H1 (cell line): ENCODE measurements at regions of chr11 and their contacts with region 1.

Region 1: DNA sequence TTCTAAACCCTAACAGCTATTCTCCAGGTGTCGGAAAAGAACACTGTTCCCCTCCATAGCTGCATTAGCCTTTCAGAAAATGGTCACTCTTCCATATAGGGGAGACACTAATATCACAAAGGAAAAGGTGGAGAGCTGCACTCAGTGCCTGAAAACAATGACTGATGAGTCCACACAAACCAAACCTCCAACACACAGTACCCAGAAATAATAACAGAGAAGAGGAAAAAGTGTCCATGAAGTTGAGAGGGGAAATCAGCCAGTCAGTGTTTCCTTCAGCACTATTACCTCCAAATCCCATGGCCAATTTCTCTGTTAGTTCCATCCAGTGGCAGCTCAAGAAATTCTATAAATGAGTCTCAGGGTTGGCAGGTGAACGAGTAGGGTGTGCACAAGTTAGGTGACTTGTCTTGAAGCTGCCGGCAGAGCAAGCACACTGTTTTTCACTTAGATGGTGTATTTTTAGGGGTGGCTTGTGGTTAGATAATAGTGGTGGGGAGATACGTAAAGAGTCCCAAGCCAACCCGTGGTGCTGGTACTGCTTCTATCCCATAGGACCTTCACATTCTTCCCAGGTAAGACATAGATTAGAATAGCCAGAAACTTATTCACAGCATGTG is 84.5 kb upstream of the CHRM4 start:
- DNase-seq: no peak
- H3K4me3 ChIP-seq: no peak overlapping the region
- H3K27ac ChIP-seq: no peak overlapping the region
- H3K4me1 ChIP-seq: no peaks in the 10 kb centered on the region
- H3K27me3 ChIP-seq: no peaks in the 10 kb centered on the region
- CTCF ChIP-seq: no peak
- EP300 ChIP-seq: no peak
- POLR2A ChIP-seq: no peak
- RAD21 ChIP-seq: no peak

Region 2: GRCh38 chr11:46497498-46497897 is 21.5 kb after region 1 on chr11:
- CTCF ChIA-PET with region 1: interaction called, 11 read pairs
- POLR2A ChIA-PET with region 1: no interaction called
- DNase-seq: no peak
- H3K4me3 ChIP-seq: no peak overlapping the region
- H3K27ac ChIP-seq: no peak overlapping the region
- H3K4me1 ChIP-seq: no peaks in the 10 kb centered on the region
- H3K27me3 ChIP-seq: no peaks in the 10 kb centered on the region
- CTCF ChIP-seq: no peak
- EP300 ChIP-seq: no peak
- POLR2A ChIP-seq: no peak
- RAD21 ChIP-seq: no peak

Region 3: GRCh38 chr11:46593550-46594373 is 117.7 kb after region 1 on chr11 and contains the start of gene AMBRA1:
- CTCF ChIA-PET with region 1: no interaction called
- POLR2A ChIA-PET with region 1: no interaction called
- DNase-seq: peak; percentile 75 to 95
- H3K4me3 ChIP-seq: peak within 1 kb of the TSS; percentile 82 to 95 (median 92)
- H3K27ac ChIP-seq: peak within 1 kb of the TSS; percentile 48; the same call in 1 of the 2 replicates
- H3K4me1 ChIP-seq: peaks cover 0 to 5% (median 3%) of the 10 kb centered on the region in 4 experiments; a peak in 4 of 7 replicates
- H3K27me3 ChIP-seq: no peaks in the 10 kb centered on the region
- CTCF ChIP-seq: no peak
- EP300 ChIP-seq: no peak
- POLR2A ChIP-seq: peak; percentile 23 to 83
- RAD21 ChIP-seq: no peak
- total RNA-seq, gene AMBRA1: 35.6 and 37.4 TPM in 2 replicates